HEK293 (cell line): ENCODE measurements at regions of chr17 and their contacts with region 1.

Region 1: DNA sequence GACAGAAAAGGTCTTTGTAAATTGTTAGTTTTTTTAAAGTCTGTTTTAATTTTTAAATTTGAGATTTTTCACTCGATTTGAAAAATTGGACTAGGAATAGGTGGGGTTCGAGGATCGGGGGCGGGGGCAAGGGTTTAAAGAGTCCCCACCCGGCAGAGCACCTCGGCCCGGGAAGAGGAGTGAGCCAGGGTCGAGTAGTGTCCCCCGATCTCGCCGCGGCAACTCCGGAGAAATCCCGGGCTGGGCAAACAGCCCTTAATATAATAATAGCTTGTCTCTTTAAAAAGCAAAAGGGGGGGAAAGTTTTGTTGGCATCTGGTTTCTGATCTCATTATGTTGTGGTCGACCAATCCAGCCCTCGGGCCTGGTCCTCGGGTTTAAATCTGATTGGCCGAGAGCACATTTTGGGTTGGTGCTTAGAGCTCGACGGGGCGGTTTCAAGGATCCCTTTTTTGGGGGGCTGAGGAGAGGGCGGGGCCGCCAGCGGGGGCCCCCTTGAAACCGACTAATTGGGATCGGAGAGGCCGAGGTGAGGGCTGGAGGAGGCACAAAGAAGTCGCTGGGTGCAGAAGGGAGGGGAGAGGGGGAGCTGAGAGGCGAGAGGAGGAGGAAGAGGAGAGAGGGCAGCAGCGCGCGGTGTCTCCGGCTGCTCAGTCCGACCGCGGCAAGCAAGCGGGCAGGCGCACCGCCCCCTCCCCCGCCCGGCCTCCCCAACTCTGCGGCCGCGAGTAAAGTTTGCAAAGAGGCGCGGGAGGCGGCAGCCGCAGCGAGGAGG is at the start of gene FZD2:
- H3K4me3 ChIP-seq: peak within 1 kb of the TSS; percentile 68
- H3K27ac ChIP-seq: peak within 1 kb of the TSS; percentile 87
- H3K4me1 ChIP-seq: peaks cover 13% of the 10 kb centered on the region
- CTCF ChIP-seq: no peak

Region 2: GRCh38 chr17:44247440-44247841 is 309.6 kb before region 1 on chr17:
- CTCF ChIA-PET with region 1: no interaction called
- POLR2A ChIA-PET with region 1: no interaction called
- H3K4me3 ChIP-seq: no peak overlapping the region
- H3K27ac ChIP-seq: no peak overlapping the region
- H3K4me1 ChIP-seq: 0 out of 2 replicates have a peak, but pooled peaks cover 2% of the 10 kb centered on the region
- CTCF ChIP-seq: no peak

Region 3: GRCh38 chr17:44543213-44543904 is 13.7 kb before region 1 on chr17:
- CTCF ChIA-PET with region 1: interaction called, 8 read pairs
- POLR2A ChIA-PET with region 1: interaction called, 22 read pairs
- H3K4me3 ChIP-seq: no peak overlapping the region
- H3K27ac ChIP-seq: no peak overlapping the region
- H3K4me1 ChIP-seq: 0 out of 2 replicates have a peak, but pooled peaks cover 3% of the 10 kb centered on the region
- CTCF ChIP-seq: no peak

Region 4: DNA sequence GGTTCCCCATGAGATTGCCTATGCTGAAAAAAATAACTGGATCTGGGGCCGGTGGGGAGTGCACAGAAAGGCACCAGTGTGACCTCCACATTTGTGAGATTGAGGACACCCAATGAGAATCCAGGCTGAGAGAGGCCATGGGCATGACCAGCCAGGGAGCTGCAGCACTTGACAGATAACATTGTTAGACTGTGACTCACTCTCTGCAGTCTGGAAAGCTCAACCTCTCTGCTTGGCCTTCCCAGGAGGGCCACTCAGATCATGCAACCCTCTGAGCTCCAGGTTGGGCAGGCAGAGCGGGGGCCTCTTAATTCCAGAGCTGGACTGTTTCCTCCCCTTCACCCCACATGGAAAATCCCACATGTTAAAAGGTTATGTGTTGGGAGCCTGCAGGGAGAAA is 30.3 kb after region 1 on chr17:
- CTCF ChIA-PET with region 1: interaction called, 4 read pairs
- POLR2A ChIA-PET with region 1: interaction called, 13 read pairs
- H3K4me3 ChIP-seq: no peak overlapping the region
- H3K27ac ChIP-seq: peak overlapping the region; percentile 28; the same call in 1 of the 2 replicates
- H3K4me1 ChIP-seq: peaks cover 6% of the 10 kb centered on the region
- CTCF ChIP-seq: no peak

Region 5: DNA sequence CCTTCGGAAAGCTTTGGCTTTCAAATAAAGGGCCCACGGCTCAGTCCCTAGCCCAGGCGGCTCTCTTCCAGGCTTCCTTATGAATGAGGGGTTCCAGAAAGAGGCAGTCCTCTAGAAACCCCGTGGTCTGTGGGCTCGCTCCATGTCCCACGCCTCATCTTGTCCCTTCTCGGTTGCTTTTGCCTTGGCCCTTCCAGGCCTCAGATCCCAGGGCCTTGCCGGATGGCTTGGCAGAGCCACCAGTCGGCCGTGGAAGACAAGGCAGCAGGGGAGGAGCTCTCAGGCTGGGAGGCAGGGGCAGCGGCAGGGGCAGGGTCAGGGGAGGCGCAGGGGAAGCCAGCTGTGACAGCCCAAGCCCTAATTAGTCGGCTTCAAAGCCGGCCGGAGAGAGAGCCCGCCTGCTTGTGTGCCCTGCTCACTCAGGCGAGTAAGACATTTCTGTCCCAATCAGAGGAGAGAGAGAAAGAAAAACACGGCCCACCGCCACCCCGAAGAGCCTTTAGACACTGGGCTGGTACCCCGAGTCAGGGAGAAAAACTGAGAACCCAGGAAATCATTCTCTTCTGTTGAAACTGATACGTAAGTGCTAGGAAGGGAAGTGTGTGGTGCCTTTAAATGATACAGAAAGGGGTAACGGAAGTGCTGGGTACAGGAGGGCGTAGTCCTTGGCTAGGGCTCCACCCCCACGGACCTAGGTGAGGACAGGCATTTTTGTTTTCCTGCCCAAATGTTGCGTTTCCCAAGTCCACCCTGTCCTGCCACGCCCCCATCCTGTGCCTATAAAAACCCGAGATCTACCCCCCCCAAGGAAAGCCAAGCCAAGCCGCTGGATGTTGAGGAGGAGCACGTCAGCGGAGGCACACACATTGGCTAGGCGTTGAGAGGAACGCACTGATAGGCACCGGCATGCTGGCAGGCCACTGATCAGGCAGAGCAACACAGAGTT is 71.5 kb after region 1 on chr17:
- CTCF ChIA-PET with region 1: no interaction called
- POLR2A ChIA-PET with region 1: no interaction called
- H3K4me3 ChIP-seq: no peak overlapping the region
- H3K27ac ChIP-seq: no peak overlapping the region
- H3K4me1 ChIP-seq: no peaks in the 10 kb centered on the region
- CTCF ChIP-seq: no peak

Region 6: DNA sequence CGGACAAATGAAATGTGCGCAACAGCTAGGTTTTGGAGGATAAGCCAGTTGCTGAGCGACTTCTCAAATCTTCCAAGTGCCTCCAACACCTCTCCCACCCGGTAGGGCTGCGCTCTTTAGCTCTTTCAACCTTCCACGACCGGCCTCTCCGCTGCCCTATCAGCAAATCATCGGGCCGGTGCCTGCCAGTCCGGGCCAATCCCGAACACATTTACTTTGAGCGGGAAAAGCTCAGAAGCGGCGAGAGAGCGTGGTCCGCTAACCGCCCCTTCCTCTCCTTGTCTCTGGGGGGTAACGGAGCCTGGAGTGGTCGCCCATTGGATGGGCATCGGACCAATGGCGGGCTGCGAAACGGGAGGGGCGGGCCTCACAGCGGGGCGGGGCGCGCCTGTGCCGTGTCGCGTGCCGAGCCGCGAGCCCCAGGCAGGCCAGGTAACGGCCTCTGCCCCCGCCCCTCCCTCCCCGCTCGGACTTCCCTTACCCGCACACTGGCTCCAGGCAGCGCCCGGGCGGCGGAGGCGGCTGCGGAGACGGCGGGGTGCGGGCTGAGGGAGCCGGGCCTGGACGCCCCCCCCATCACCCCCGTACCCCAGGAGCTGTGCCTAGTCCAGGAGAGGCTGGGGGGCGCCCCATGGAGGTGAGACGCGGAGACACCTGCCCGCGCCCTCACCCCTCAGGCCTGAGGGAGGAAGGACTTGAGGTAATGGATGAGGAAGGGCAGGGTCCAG is 99.1 kb after region 1 on chr17 and contains the start of gene MEIOC:
- CTCF ChIA-PET with region 1: no interaction called
- POLR2A ChIA-PET with region 1: interaction called, 12 read pairs
- H3K4me3 ChIP-seq: peak within 1 kb of the TSS; percentile 41
- H3K27ac ChIP-seq: peak within 1 kb of the TSS; percentile 69; the same call in 1 of the 2 replicates
- H3K4me1 ChIP-seq: no peaks in the 10 kb centered on the region
- CTCF ChIP-seq: no peak